Breast epithelium (tissue), 4 donors: ENCODE measurements at regions of chr1 and their contacts with region 1.

Region 1: GRCh38 chr1:55554611-55555010 is 339.4 kb upstream of the USP24 start:
- DNase-seq: no peak
- H3K4me3 ChIP-seq: no peak overlapping the region
- H3K27ac ChIP-seq: no peak overlapping the region
- H3K4me1 ChIP-seq: no peaks in the 10 kb centered on the region
- H3K27me3 ChIP-seq: no peaks in the 10 kb centered on the region
- CTCF ChIP-seq: no peak
- POLR2A ChIP-seq: no peak

Region 2: DNA sequence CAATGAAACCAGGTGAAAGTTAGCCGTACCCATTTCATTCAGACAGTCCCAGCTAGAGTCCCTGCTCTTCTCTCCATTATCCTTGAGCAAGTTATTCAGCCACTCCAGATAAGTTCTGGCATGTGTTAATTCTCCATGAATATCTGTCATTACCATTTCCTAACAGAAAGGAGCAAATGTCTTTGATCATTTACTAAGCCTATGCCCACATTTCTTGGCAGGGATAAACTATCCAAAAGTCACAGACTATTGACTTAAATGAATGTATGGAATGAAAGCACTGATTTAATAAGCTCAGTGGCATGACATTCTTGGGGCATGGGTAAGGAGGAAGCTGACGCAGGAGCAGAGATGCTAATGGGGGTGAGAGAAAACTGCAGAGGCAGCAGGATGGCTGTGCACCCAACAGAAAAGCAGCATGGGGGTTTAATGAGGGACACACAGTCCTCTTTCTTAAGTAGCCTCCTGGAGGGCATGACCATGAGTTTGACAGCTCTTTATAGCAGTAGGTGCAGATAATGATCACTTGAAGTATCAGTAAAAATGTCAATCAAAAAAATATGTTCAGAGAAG is 650.0 kb before region 1 on chr1:
- intact Hi-C with region 1: no loop called
- DNase-seq: no peak
- H3K4me3 ChIP-seq: no peak overlapping the region
- H3K27ac ChIP-seq: no peak overlapping the region
- H3K4me1 ChIP-seq: no peaks in the 10 kb centered on the region
- H3K27me3 ChIP-seq: no peaks in the 10 kb centered on the region
- CTCF ChIP-seq: no peak
- POLR2A ChIP-seq: no peak

Region 3: DNA sequence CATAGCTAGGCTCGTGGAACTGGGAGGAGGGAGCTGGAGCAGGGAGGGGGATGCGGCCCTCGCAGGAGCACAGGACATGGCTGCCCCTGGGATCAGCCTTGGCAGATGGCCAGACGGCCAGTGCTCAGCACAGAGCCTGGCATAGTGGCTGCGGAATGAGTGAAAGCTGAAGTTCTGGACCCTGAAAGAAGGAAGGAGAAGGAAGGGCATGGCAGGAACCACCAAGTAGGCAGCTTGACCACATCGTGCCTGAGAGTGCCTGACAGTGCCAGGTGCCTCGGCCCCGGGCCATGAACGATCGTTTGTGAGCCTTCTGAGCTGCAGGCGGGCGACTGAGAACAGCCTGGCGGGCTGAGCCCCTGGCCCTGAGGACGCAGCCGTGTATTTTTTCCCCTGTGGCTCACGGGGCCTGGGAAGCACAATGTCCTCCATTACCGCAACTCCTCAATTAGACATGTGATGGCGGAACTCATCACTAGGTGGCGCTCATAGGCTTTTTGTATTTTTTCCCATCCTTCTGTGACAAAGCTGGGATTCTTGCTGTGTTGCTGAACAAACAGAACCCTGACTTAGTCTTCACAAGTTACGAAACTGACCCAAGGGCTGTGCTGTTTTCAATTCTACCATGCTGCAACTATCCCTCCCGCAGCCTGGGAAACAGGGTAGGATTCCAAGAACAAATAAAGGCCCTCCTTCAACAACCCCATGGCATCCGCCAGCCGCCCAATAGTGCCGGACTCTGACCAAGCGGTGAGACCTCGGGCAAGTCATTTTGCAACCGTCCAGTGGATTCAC is 604.0 kb before region 1 on chr1:
- intact Hi-C with region 1: no loop called
- DNase-seq: peak; percentile 76 to 81
- H3K4me3 ChIP-seq: peak overlapping the region in 2 of 3 donors; percentile 25 to 58
- H3K27ac ChIP-seq: peak overlapping the region; percentile 58 to 89
- H3K4me1 ChIP-seq: peaks cover 0 to 5% of the 10 kb centered on the region in 2 donors
- H3K27me3 ChIP-seq: no peaks in the 10 kb centered on the region
- CTCF ChIP-seq: peak; percentile 82 to 92 (median 91)
- POLR2A ChIP-seq: no peak

Region 4: DNA sequence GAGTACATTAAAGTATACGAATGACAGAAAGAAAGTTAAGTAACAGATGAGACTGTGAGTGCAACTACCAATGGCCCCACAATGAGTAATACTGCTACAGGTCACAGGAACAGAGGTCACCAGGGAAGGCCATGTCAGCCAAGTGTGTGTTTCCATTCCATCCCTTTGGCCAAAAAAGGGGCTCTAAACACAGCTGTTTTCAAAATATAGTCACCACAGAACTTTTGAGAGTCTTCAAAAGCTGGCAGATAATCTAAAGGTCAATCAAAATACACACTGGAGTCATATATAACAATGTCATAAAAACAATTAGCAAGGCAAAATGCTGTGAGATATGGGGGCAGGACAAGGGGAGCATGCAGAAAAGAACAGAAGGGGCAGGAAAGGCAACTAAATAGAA is 349.6 kb before region 1 on chr1:
- intact Hi-C with region 1: loop called (anchors 5 kb)
- DNase-seq: no peak
- H3K4me3 ChIP-seq: no peak overlapping the region
- H3K27ac ChIP-seq: no peak overlapping the region
- H3K4me1 ChIP-seq: no peaks in the 10 kb centered on the region
- H3K27me3 ChIP-seq: no peaks in the 10 kb centered on the region
- CTCF ChIP-seq: no peak
- POLR2A ChIP-seq: no peak